ENCODE measurements at regions of chr1 and their contacts with region 1.

Region 1: GRCh38 chr1:39609618-39610331 is 29.7 kb downstream of the HEYL start:
- DNase-seq: peak; percentile 88
- ATAC-seq: peak; percentile 91

Region 2: GRCh38 chr1:39653546-39654031 is 43.8 kb after region 1 on chr1:
- intact Hi-C with region 1: loop called (anchors 5 kb)
- DNase-seq: peak; percentile 86
- ATAC-seq: peak; percentile 66

Region 3: DNA sequence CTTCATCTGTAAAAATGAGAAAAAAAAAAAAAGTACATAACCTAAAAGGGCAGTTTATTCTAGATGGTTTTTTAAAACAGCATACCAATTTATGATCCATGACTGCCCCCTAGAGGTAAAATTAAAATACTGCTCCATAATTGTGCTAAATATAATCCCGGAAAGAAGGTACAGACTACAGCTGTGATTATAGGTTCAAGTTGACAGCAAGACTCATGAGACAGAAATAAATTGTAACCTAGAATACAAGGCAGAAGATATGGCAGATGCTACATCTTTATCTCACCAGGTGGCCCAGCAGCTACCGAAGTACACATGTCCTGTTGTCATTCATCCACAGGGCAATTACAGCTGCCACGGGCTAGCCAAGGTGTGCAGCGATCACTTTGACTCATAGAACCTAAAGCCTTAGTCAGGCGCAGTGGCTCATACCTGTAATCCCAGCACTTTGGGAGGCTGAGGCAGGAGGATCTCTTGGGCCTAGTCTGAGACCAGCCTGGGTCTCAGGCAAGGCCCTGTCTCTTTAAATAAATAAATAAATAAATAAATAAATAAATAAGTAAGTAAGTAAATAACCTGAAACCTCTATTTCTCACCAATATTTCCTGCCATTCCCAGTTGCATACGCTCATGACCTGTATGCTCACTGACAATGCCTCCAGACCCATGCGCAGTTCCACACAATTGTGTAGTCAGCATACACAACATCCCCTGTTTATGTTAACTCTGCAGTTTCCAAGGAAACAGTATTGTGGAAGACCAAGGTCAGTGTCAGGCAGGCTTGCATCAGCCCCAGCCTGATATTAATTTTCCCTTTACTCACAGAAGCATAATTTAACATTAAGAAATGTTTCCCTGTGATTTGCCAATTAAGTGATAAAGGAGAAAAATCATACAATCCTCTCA is 110.6 kb after region 1 on chr1:
- intact Hi-C with region 1: loop called (anchors 2 kb)
- DNase-seq: no peak
- ATAC-seq: peak; percentile 64